Panc1 (cell line): ENCODE measurements at regions of chr10 and their contacts with region 1.

Region 1: GRCh38 chr10:91908337-91909116 is 759 bp downstream of the FGFBP3 start:
- DNase-seq: peak; percentile 87
- ATAC-seq: peak; percentile 96
- H3K4me3 ChIP-seq: peak overlapping the region; percentile 68 to 89
- H3K27ac ChIP-seq: peak overlapping the region; percentile 83
- H3K4me1 ChIP-seq: peaks cover 10% of the 10 kb centered on the region; the same call in 1 of the 2 replicates
- H3K27me3 ChIP-seq: no peaks in the 10 kb centered on the region
- CTCF ChIP-seq: peak; percentile 95

Region 2: DNA sequence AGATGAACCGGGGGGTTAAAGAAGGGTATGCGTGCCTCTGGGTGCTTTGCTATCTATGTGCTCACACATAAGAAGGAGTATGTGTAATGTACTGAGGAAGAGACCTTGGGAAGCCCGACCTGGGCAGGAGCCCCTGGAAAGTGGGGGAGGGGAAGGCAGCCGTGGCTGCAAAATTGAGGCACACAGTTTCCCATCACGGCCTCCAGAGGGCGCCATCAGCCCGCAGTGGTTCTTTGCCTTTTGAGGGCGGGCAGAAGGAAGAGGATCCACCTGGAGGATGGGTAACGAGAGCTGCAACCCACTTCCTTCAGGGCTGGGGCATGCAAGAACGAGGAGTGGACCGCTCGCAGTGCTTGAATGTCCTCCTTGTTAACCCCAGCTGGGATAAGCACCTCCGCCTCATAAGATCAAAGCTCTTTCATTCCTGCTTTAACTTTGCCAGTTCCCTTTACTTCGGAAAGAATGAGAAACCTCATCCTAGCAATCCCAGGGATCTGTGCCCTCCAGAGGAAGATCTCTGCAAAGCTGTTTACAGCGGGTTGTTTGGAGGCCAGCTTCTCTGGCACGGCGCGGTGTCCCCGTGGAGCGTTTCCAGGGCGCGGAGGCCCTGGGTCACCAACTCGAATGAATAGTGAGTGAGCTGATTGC is 610.2 kb before region 1 on chr10:
- CTCF ChIA-PET with region 1: interaction called, 13 read pairs
- POLR2A ChIA-PET with region 1: no interaction called
- in situ Hi-C with region 1: no loop called
- intact Hi-C with region 1: loop called (anchors 10 kb)
- DNase-seq: peak; percentile 71
- ATAC-seq: peak; percentile 97
- H3K4me3 ChIP-seq: peak overlapping the region; percentile 44 to 81
- H3K27ac ChIP-seq: peak overlapping the region; percentile 64
- H3K4me1 ChIP-seq: no peaks in the 10 kb centered on the region; the same call in 1 of the 2 replicates
- H3K27me3 ChIP-seq: no peaks in the 10 kb centered on the region
- CTCF ChIP-seq: peak; percentile 99

Region 3: DNA sequence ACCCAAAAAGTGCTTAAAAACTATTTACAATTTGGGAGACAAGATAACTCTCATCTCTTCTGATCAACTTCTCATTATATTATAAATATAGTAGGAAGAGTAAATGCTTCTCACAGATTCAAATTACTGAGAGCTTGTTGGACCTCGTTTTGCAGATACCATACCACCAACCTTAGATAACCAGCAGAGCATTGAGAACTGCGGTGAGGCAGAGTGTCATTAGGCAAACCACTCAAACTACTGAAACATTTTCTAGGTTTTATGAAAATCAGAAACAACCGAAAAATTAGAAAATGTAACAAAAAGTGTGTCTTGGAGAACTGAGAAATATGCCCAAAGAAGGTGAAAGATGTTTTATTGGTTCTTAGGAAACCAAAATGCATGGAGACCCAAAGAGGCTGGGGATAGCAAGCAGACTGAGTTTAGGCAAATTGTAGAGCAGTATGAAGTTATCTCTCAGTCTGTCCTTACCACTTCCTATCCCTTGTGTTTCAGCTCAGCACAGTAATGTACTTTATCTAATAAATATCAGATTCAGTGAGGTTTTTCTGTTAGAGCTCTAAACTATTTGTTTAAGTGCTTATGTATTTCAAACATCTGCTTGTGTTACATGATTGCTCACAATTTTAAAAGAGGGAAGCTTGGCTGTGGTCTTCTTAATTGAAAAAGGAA is 420.5 kb before region 1 on chr10:
- CTCF ChIA-PET with region 1: no interaction called
- POLR2A ChIA-PET with region 1: no interaction called
- in situ Hi-C with region 1: no loop called
- intact Hi-C with region 1: loop called (anchors 10 kb)
- DNase-seq: no peak
- ATAC-seq: no peak
- H3K4me3 ChIP-seq: no peak overlapping the region
- H3K27ac ChIP-seq: no peak overlapping the region
- H3K4me1 ChIP-seq: no peaks in the 10 kb centered on the region
- H3K27me3 ChIP-seq: no peaks in the 10 kb centered on the region
- CTCF ChIP-seq: no peak

Region 4: DNA sequence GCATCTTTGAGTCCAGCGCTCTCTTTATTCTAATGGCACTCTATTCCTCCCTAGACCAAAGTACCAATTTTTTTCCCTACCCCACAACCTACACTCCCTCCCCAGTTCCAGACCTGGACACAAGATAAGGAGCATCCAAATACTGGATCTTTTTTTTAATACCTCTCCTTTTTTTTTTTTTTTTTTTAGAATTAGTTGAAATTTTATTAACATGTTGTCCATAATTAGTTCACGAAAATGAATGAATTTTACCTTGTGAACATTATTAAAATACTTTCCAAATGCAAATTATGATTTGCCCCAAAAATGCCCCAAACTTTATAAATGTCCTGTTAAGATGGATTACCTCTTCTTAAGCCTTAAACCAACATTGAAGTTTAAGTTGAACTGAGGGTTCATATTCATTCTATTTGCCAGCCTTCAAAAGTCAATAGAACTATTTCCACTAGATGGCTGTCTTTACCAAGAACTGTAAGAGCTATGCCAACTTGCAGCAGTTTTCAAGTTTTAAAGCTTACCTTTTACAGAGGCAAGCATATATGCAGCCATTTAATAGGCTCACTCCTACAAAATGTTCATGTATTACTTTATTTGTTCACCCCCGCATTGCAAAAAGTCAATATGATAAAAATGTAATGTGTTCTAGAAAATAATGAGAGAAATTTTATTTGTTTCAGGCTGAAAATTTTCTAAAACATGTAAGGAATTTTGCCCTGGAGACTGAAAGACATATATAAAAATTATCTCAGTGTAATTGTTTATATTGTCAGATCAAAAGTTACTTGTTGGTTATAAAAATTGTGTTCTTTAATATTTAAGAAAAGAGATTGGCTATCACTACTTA is 150.0 kb before region 1 on chr10:
- CTCF ChIA-PET with region 1: interaction called, 7 read pairs
- POLR2A ChIA-PET with region 1: no interaction called
- in situ Hi-C with region 1: no loop called
- intact Hi-C with region 1: loop called (anchors 1 kb)
- DNase-seq: peak; percentile 39
- ATAC-seq: peak; percentile 94
- H3K4me3 ChIP-seq: no peak overlapping the region
- H3K27ac ChIP-seq: no peak overlapping the region
- H3K4me1 ChIP-seq: no peaks in the 10 kb centered on the region
- H3K27me3 ChIP-seq: peaks cover 16% of the 10 kb centered on the region
- CTCF ChIP-seq: peak; percentile 71; the same call in 1 of the 2 replicates